AG04450 (cell line): ENCODE measurements at regions of chr10 and their contacts with region 1.

Region 1: GRCh38 chr10:5581670-5582526 is 57.1 kb downstream of the CALML3 start:
- DNase-seq: no peak
- H3K4me3 ChIP-seq: no peak overlapping the region
- H3K27ac ChIP-seq: no peak overlapping the region
- H3K27me3 ChIP-seq: no peaks in the 10 kb centered on the region
- CTCF ChIP-seq: no peak

Region 2: DNA sequence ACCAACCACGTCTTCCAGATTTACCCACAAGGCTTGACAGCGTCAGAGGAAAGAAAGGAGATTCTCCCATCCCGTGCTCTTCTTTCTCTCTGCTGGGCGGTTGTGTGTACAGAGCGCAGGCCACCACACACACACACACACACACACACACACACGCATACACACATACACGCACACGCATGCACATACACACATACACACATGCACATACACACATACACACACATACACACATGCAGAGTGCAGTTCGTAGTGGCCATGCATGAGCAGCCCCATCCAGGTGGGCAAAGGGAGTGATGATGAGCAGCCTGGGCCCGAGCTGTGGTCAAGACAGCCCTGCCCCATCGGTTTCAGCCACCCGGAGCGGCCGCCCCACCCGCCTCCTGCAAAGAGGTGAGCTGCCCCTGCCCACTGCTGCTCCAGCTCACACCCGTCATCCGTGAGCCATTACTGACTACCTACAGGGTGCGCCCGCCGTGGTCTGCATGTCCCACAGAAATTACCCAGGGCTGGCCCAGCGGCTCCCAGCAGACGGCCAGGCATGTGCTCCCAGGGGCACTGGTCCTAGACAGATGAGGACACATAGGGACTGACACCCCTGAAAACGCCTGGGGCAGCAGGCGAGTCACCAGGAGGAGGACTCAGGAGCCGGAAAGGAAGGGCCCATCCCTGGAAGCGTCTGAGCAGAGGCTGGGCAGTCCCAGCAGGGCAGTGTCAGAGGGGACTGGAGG is 14.9 kb after region 1 on chr10:
- CTCF ChIA-PET with region 1: no interaction called
- POLR2A ChIA-PET with region 1: no interaction called
- DNase-seq: no peak
- H3K4me3 ChIP-seq: no peak overlapping the region
- H3K27ac ChIP-seq: peak overlapping the region; percentile 66
- H3K27me3 ChIP-seq: no peaks in the 10 kb centered on the region
- CTCF ChIP-seq: no peak

Region 3: GRCh38 chr10:5634918-5635317 is 53.0 kb after region 1 on chr10:
- CTCF ChIA-PET with region 1: interaction called, 11 read pairs
- POLR2A ChIA-PET with region 1: no interaction called
- DNase-seq: no peak
- H3K4me3 ChIP-seq: no peak overlapping the region
- H3K27ac ChIP-seq: no peak overlapping the region
- H3K27me3 ChIP-seq: no peaks in the 10 kb centered on the region
- CTCF ChIP-seq: no peak